ENCODE measurements at regions of chr2 and their contacts with region 1.

Region 1: DNA sequence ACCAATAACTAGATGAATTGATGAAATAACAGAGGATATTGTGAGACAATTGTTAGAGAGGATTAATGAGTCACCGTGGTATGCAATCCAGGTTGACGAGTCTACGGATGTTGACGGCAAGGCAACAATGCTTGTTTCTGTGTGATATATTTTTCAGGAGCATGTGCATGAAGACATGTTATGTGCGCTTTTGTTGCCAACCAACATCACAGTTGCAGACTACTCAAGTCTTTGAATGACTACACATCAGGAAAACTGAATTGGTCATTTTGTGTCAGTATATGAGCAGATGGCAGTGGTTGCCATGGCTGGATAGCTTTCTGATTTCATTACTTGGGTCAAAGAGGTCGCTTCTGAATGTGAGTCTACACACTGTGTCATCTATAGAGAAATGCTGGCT is 96.8 kb upstream of the CRACDL start:
- DNase-seq: no peak
- ATAC-seq: no peak
- H3K4me3 Mint-ChIP-seq: no peak overlapping the region
- H3K27ac Mint-ChIP-seq: no peak overlapping the region
- H3K4me1 Mint-ChIP-seq: no peaks in the 10 kb centered on the region
- H3K27me3 Mint-ChIP-seq: no peaks in the 10 kb centered on the region

Region 2: DNA sequence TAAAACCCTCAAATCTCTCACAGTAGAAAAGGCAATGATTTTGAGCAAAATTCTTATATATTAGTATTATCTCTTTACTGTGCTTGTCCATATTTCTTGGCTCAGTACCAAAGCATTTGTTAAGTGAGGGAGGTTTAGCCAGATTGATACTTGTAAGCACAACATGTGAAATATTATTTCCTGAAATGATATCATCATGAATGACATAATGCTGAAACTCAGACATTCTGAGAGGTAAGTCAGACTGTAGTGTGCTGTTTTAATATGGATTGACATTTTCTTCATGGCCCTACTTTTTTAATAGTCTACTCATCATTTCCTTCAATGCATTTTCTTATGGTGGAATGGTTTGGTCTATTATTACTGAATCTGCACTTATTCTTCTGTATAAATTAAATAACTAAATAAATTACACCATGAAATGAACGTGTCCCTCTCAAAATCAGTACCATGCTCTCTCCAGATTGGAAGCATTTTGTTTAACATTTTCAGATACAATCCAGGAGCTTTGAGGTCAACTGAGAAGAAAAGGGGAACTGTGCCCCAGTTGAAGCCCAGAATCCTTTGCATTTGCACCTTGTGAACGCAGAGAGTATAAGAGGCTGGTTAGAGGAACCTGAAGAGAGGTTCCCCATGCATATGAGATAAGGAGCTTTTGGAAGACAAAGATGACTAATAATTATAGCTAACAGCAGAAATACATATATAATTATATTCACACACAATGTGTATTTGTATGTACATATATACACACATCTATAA is 46.7 kb before region 1 on chr2:
- CTCF ChIA-PET with region 1: no interaction called
- POLR2A ChIA-PET with region 1: no interaction called
- intact Hi-C with region 1: loop called in 1 of 2 experiments (anchors 2 kb)
- DNase-seq: no peak
- ATAC-seq: peak; percentile 51
- H3K4me3 Mint-ChIP-seq: no peak overlapping the region
- H3K27ac Mint-ChIP-seq: no peak overlapping the region
- H3K4me1 Mint-ChIP-seq: no peaks in the 10 kb centered on the region
- H3K27me3 Mint-ChIP-seq: peaks cover 2% of the 10 kb centered on the region

Region 3: DNA sequence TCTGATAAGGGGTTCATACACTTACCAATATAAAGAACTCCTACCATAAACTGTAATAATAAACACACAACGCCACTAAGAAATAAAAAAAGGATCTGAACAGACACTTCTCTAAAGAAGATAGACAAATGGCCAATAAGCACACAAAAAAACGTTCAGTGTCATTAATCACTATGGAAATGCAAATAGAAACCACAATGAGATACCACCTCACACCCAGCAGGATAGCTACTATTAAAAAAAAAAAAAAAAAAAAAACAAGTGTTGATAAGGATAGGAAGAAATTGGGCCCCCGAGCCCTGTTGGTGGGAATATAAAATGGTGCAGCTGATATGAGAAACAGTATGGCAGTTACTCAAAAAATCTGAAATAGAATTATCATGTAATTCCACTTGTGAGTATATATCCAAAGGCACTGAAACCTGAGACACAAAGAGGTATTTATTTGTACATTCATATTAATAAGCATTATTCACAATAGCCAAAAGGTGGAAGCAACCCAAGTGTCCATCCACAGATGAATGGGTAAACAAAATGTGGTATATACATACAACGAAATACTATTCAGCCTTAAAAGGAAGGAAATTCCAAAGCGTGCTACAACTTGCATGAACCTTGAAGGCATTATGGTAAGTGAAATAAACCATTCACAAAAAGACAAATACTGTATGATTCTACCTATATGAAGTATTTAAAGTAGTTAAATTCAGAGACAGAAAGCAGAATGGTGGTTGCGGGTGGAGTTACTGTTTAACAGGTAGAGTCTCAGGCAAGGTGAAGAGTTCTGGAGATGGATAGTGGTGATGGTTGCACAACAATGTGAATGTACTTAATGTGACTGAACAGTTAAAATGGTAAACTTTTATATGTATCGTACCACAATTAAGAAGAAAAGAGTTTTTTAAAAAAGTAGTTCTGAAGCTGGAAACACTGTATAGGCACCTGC is 439.1 kb after region 1 on chr2:
- CTCF ChIA-PET with region 1: no interaction called
- POLR2A ChIA-PET with region 1: no interaction called
- intact Hi-C with region 1: no loop called
- DNase-seq: no peak
- ATAC-seq: no peak
- H3K4me3 Mint-ChIP-seq: no peak overlapping the region
- H3K27ac Mint-ChIP-seq: no peak overlapping the region
- H3K4me1 Mint-ChIP-seq: peaks cover 42% of the 10 kb centered on the region
- H3K27me3 Mint-ChIP-seq: no peaks in the 10 kb centered on the region